HAP-1 (cell line): ENCODE measurements at regions of chr14 and their contacts with region 1.

Region 1: DNA sequence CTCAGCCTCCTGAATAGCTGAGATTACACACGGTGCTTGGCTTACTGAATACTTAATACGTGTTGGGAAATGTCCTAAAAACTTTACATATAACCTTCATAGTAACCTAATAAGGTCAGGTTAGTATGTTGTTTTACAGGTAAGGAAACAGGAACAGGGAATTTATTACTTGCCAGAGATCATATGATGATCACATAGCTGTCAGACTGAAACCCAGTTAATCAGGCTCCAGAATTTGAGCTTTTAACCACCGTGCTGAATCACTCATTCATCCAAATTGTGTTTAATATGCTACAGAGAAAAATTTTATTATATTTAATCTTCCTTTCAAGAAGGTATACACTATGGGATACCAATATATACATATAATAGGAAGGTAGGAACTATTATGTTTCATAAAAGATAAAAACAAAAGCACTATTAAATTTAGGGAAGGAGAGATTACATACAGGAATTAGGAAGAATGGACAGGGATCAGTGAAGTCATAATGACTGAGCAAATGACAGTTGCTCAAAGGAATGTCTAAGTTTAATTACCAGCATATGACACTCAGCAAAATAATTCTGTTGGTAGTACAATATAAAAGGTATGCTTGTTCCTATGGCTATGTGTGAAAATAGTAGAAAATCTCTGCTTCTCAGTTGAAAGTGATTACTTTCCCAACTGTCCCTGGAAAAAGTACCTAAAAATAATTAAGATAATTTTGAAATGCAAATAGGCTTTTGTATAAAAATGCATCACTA is 59.3 kb downstream of the HEATR5A start:
- DNase-seq: no peak
- H3K4me3 ChIP-seq: no peak overlapping the region
- H3K4me1 ChIP-seq: no peaks in the 10 kb centered on the region
- H3K27me3 ChIP-seq: no peaks in the 10 kb centered on the region

Region 2: GRCh38 chr14:30982533-30982932 is 378.6 kb before region 1 on chr14:
- in situ Hi-C with region 1: loop called (anchors 5 kb)
- DNase-seq: no peak
- H3K4me3 ChIP-seq: no peak overlapping the region
- H3K4me1 ChIP-seq: peaks cover 2% of the 10 kb centered on the region; the same call in 1 of the 2 replicates
- H3K27me3 ChIP-seq: no peaks in the 10 kb centered on the region

Region 3: DNA sequence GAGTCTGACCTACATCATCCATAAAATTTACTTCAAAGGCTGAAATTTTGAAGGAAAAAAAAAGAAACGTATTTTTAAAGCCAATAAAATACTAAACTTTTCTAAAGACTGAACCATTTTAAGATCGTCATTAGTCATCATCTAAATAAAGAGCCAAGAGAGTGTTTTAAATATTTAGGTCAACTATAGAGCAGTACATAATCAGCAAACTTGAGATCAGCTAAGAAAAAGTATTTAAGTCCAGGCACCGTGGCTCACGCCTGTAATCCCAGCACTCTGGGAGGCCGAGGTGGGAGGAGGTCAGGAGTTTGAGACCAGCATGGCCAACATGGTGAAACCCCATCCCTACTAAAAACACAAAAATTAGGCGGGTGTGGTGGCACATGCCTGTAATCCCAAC is 189.0 kb before region 1 on chr14:
- in situ Hi-C with region 1: loop called (anchors 10 kb)
- DNase-seq: no peak
- H3K4me3 ChIP-seq: no peak overlapping the region
- H3K4me1 ChIP-seq: no peaks in the 10 kb centered on the region
- H3K27me3 ChIP-seq: no peaks in the 10 kb centered on the region

Region 4: GRCh38 chr14:32469388-32470160 is 1108.5 kb after region 1 on chr14:
- in situ Hi-C with region 1: loop called (anchors 25 kb)
- DNase-seq: peak in 1 of 2 experiments; percentile 71
- H3K4me3 ChIP-seq: no peak overlapping the region
- H3K4me1 ChIP-seq: peaks cover 22% of the 10 kb centered on the region
- H3K27me3 ChIP-seq: no peaks in the 10 kb centered on the region